ENCODE measurements at regions of chr11 and their contacts with region 1.

Region 1: GRCh38 chr11:29616611-29617010 is 400.2 kb downstream of the KCNA4 start:
- DNase-seq: no peak
- H3K4me3 ChIP-seq: no peak overlapping the region
- H3K27ac ChIP-seq: no peak overlapping the region
- H3K4me1 ChIP-seq: no peaks in the 10 kb centered on the region
- H3K27me3 ChIP-seq: no peaks in the 10 kb centered on the region
- CTCF ChIP-seq: no peak
- EP300 ChIP-seq: no peak
- POLR2A ChIP-seq: no peak

Region 2: GRCh38 chr11:29712580-29712979 is 96.0 kb after region 1 on chr11:
- in situ Hi-C with region 1: loop called in 1 of 4 experiments (anchors 25 kb)
- intact Hi-C with region 1: no loop called
- DNase-seq: no peak
- H3K4me3 ChIP-seq: no peak overlapping the region
- H3K27ac ChIP-seq: no peak overlapping the region
- H3K4me1 ChIP-seq: no peaks in the 10 kb centered on the region
- H3K27me3 ChIP-seq: no peaks in the 10 kb centered on the region
- CTCF ChIP-seq: no peak
- EP300 ChIP-seq: no peak
- POLR2A ChIP-seq: no peak

Measured in transverse colon (tissue), 4 donors.